Activated CD8-positive, alpha-beta T cell treated with anti-CD3 and anti-CD28 coated beads for 36 hours (primary cell): ENCODE measurements at regions of chr7 and their contacts with region 1.

Region 1: DNA sequence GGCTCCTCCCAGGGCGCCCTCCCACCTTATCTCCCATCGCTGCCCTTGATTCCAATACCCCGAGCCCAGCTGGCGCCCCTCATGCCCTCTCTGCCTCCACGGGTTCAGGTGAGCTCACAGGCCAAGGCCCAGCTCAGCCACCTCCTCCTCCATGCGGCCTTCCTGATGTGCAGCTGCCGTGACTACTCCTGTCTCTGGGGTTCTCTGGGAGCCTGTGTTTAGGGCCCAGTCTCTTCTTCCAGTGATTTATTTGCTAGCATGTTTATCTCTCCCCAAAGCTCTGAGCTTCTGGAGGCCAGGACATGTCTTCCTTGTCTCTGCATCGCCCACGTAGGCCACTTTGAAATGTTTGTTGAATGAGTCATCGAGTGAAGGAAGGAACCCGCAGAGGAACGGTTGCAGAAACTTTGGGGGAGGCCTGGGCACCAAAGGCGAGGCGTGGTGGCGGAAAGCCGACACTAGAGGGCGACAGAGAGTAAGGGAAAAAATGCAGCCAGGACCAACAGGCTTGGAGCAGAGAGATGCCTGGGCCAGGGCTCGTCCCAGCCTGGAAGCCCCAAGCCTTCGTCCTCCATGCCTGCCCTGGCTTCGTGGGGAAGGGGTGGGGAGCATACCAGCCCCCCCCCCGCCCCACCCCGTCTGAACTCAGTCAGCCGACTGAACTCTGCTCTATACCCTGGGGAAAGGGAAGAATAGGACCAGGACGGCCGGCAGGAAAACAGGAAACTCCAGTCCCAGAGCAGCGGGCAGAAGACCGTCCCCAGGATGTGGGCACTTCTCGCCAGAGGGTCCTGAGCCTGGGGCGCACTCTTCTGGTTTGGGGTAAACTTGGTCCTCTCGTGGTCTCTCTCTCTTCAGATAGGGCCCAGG is 10.9 kb upstream of the HSPB1 start:
- DNase-seq: peak; percentile 95
- ATAC-seq: peak; percentile 94
- H3K4me3 Mint-ChIP-seq: peak overlapping the region; percentile 31
- H3K27ac Mint-ChIP-seq: peak overlapping the region; percentile 81
- H3K4me1 Mint-ChIP-seq: peaks cover 13% of the 10 kb centered on the region
- H3K27me3 Mint-ChIP-seq: no peaks in the 10 kb centered on the region
- CTCF ChIP-seq: peak; percentile 96

Region 2: GRCh38 chr7:75989500-75990388 is 301.8 kb before region 1 on chr7:
- CTCF ChIA-PET with region 1: no interaction called
- POLR2A ChIA-PET with region 1: no interaction called
- intact Hi-C with region 1: no loop called
- DNase-seq: no peak
- ATAC-seq: no peak
- H3K4me3 Mint-ChIP-seq: no peak overlapping the region
- H3K27ac Mint-ChIP-seq: no peak overlapping the region
- H3K4me1 Mint-ChIP-seq: peaks cover 4% of the 10 kb centered on the region
- H3K27me3 Mint-ChIP-seq: no peaks in the 10 kb centered on the region
- CTCF ChIP-seq: no peak

Region 3: GRCh38 chr7:76244781-76245391 is 46.7 kb before region 1 on chr7:
- CTCF ChIA-PET with region 1: no interaction called
- POLR2A ChIA-PET with region 1: no interaction called
- intact Hi-C with region 1: no loop called
- DNase-seq: no peak
- ATAC-seq: no peak
- H3K4me3 Mint-ChIP-seq: no peak overlapping the region
- H3K27ac Mint-ChIP-seq: no peak overlapping the region
- H3K4me1 Mint-ChIP-seq: no peaks in the 10 kb centered on the region
- H3K27me3 Mint-ChIP-seq: peaks cover 2% of the 10 kb centered on the region
- CTCF ChIP-seq: no peak

Region 4: DNA sequence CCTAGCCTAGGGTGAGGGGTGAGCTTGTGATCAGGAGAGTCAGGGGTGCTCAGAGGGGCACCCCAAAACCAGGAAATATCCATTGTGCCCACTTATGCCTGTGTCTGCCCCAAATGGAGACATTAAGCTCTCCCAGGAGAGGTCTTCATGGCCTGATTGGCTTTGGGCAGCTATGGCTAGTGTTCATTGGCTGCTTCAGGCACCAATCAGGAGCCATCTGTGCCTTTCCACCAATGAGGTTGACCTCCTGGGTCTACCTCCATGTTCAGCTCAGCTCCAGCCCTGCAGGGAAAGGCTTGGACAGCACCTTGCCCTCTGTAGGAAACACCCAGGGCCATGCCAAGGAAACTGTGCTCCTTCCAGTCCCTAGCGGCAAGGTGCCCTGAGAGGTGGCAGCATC is 13.0 kb before region 1 on chr7:
- CTCF ChIA-PET with region 1: interaction called, 14 read pairs
- POLR2A ChIA-PET with region 1: interaction called, 4 read pairs
- intact Hi-C with region 1: no loop called
- DNase-seq: no peak
- ATAC-seq: no peak
- H3K4me3 Mint-ChIP-seq: no peak overlapping the region
- H3K27ac Mint-ChIP-seq: no peak overlapping the region
- H3K4me1 Mint-ChIP-seq: peaks cover 14% of the 10 kb centered on the region
- H3K27me3 Mint-ChIP-seq: peaks cover 32% of the 10 kb centered on the region
- CTCF ChIP-seq: no peak

Region 5: GRCh38 chr7:76302347-76303201 is 11.0 kb after region 1 on chr7 and contains the start of gene HSPB1:
- CTCF ChIA-PET with region 1: interaction called, 23 read pairs
- POLR2A ChIA-PET with region 1: interaction called, 3 read pairs
- intact Hi-C with region 1: no loop called
- DNase-seq: peak; percentile 74
- ATAC-seq: peak; percentile 52
- H3K4me3 Mint-ChIP-seq: peak within 1 kb of the TSS; percentile 92
- H3K27ac Mint-ChIP-seq: peak within 1 kb of the TSS; percentile 94
- H3K4me1 Mint-ChIP-seq: peaks cover 15% of the 10 kb centered on the region
- H3K27me3 Mint-ChIP-seq: peaks cover 4% of the 10 kb centered on the region
- CTCF ChIP-seq: no peak
- total RNA-seq, gene HSPB1: 104 to 109 TPM